ENCODE measurements at regions of chr7 and their contacts with region 1.

Region 1: DNA sequence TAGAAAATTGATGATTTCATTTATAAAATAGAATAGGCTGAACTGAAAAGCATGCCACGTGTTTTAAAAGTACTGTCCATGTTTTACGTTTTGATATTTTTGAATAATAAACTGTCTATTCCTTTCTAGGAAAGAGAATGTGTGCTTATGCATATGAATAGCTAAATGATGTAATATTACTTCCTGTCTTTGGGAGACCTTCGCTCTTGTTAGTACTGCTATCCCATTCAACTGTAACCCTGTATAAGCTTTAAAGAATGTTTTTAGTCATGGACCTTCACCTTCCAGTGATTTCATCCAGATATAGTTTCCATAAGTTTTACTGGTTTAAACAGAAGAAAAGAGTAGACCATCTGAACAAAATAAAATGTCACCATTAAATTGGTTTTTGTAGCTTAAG is 274.4 kb upstream of the SEMA3A start:
- DNase-seq: no peak
- H3K4me3 ChIP-seq: no peak overlapping the region
- H3K27ac ChIP-seq: no peak overlapping the region
- H3K4me1 ChIP-seq: no peaks in the 10 kb centered on the region
- H3K27me3 ChIP-seq: no peaks in the 10 kb centered on the region
- CTCF ChIP-seq: no peak
- EP300 ChIP-seq: no peak
- POLR2A ChIP-seq: no peak

Region 2: GRCh38 chr7:86252406-86252805 is 1783.4 kb after region 1 on chr7:
- in situ Hi-C with region 1: no loop called
- intact Hi-C with region 1: loop called (anchors 10 kb)
- DNase-seq: no peak
- H3K4me3 ChIP-seq: no peak overlapping the region
- H3K27ac ChIP-seq: no peak overlapping the region
- H3K4me1 ChIP-seq: no peaks in the 10 kb centered on the region
- H3K27me3 ChIP-seq: no peaks in the 10 kb centered on the region
- CTCF ChIP-seq: no peak
- EP300 ChIP-seq: no peak
- POLR2A ChIP-seq: no peak

Measured in transverse colon (tissue), 4 donors.